ENCODE measurements at regions of chr1 and their contacts with region 1.

Region 1: DNA sequence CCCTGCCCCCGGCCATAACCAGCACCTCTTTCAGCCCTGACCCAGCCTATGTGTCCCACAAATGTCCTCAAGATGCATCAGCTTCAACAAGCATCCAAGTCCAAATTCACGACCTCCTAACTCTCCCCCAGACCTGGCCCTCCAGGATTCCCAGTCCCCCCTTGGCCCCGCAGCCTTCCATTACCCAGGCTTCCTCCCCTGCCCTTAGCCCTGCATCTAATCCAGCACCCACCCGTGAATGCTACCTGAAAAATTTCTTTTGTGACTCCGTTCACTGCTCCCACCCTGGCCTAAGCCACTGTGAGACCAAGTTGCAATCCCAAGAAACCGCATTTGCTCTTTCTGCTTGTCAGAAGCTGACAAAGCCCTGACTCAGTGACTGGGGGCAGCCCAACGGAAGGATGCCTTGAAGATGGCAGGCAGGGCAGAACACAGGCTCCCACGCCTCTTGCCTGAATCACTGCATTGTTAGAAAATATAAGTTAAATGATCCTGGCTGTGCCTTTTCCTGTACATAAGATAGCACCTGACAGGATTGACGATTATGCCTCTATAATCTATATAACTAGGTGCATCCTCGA is 939 bp upstream of the MFAP2 start:
- DNase-seq: no peak
- ATAC-seq: peak; percentile 31; the same call in 1 of the 2 replicates
- H3K4me3 ChIP-seq: no peak overlapping the region
- H3K27ac ChIP-seq: no peak overlapping the region
- H3K4me1 ChIP-seq: peaks cover 4% of the 10 kb centered on the region; the same call in 1 of the 2 replicates
- H3K27me3 ChIP-seq: no peaks in the 10 kb centered on the region
- CTCF ChIP-seq: no peak

Region 2: GRCh38 chr1:16944038-16944437 is 37.3 kb before region 1 on chr1:
- CTCF ChIA-PET with region 1: no interaction called
- POLR2A ChIA-PET with region 1: no interaction called
- in situ Hi-C with region 1: no loop called
- intact Hi-C with region 1: no loop called
- DNase-seq: no peak
- ATAC-seq: no peak
- H3K4me3 ChIP-seq: no peak overlapping the region
- H3K27ac ChIP-seq: no peak overlapping the region
- H3K4me1 ChIP-seq: no peaks in the 10 kb centered on the region; the same call in 1 of the 2 replicates
- H3K27me3 ChIP-seq: no peaks in the 10 kb centered on the region
- CTCF ChIP-seq: no peak

Region 3: DNA sequence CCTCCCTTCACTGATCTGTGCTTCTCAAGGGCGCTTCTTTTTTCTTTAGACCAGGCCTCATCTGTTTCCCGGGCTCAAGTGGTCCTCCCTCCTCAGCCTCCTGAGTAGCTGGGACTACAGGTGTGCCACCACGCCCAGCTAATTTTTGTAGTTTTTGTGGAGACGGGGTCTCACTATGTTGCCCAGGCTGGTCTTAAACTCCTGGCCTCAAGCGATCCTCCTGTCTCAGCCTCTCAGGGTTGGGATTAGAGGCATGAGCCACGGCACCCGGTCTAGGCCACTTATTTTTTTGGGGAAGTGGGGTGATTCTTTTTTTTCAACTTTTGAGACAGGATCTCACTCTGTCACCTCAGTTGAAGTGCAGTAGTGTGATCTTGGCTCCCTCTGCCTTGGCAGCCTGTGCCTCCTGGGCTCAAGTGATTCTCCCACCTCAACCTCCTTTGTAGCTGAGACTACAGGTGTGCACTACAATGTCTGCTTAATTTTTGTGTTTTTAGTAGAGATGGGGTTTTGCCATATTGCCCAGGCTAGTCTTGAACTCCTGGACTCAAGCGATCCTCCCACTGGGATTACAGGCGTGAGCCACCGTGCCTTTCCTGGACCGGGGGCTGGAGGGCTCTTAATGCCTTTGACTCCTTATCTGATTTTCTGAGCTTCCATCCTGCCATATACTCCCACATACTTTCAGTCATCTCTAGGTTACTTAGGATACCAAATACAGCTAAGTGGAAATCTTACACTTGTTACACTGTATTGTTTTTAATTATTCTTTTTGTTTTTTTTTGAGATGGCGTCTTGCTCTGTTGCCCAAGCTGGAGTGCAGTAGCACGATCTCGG is 19.8 kb before region 1 on chr1:
- CTCF ChIA-PET with region 1: interaction called, 4 read pairs
- POLR2A ChIA-PET with region 1: interaction called, 10 read pairs
- in situ Hi-C with region 1: no loop called
- intact Hi-C with region 1: no loop called
- DNase-seq: no peak
- ATAC-seq: no peak
- H3K4me3 ChIP-seq: peak overlapping the region; percentile 43 to 57
- H3K27ac ChIP-seq: peak overlapping the region; percentile 64; the same call in 1 of the 2 replicates
- H3K4me1 ChIP-seq: peaks cover 5% of the 10 kb centered on the region
- H3K27me3 ChIP-seq: no peaks in the 10 kb centered on the region
- CTCF ChIP-seq: no peak

Region 4: DNA sequence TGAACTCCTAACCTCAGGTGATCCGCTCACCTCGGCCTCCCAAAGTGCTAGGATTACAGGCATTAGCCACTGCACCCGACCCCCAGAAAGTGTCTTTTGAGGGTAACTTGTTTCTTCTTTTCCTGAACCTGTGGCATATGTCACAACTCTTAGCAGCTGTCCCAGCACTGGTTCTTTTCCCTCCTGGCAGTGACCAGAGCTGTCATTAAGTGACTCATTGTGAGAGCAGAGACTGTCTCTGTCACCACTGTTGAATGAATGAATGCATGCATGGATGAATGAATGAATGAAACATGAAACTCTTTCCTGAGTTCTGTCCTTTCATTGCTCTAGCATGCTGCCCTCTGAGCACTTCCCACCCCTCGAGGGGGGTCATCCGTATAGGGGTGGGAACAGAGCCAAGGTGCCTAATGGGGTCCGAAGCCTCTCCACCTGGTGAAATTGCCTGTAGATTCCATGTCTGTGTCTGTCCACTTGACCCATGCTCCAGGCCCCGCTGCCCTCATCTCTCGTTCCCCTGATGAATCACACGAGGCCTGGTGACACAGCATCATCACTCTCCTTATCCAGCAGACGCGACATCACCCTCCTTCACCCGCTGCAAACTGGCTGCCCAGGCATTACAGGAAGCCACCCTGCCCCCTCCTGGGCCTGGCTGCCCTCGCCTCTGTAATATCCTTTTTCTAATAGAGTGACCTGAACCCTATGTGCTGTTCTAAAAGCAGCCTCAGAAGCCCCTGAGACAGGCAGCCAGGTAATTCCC is 1201.2 kb after region 1 on chr1:
- CTCF ChIA-PET with region 1: interaction called, 15 read pairs
- POLR2A ChIA-PET with region 1: no interaction called
- in situ Hi-C with region 1: no loop called
- intact Hi-C with region 1: no loop called
- DNase-seq: peak; percentile 4
- ATAC-seq: no peak
- H3K4me3 ChIP-seq: no peak overlapping the region
- H3K27ac ChIP-seq: no peak overlapping the region
- H3K4me1 ChIP-seq: no peaks in the 10 kb centered on the region
- H3K27me3 ChIP-seq: peaks cover 21% of the 10 kb centered on the region
- CTCF ChIP-seq: no peak

Measured in Panc1 (cell line).